ENCODE measurements at regions of chr6 and their contacts with region 1.

Region 1: GRCh38 chr6:47242483-47243386 is 67.0 kb downstream of the TNFRSF21 start:
- DNase-seq: peak; percentile 92
- H3K4me3 ChIP-seq: no peak overlapping the region
- H3K27ac ChIP-seq: peak overlapping the region; percentile 35
- H3K4me1 ChIP-seq: peaks cover 9% of the 10 kb centered on the region
- H3K27me3 ChIP-seq: no peaks in the 10 kb centered on the region
- CTCF ChIP-seq: no peak

Region 2: DNA sequence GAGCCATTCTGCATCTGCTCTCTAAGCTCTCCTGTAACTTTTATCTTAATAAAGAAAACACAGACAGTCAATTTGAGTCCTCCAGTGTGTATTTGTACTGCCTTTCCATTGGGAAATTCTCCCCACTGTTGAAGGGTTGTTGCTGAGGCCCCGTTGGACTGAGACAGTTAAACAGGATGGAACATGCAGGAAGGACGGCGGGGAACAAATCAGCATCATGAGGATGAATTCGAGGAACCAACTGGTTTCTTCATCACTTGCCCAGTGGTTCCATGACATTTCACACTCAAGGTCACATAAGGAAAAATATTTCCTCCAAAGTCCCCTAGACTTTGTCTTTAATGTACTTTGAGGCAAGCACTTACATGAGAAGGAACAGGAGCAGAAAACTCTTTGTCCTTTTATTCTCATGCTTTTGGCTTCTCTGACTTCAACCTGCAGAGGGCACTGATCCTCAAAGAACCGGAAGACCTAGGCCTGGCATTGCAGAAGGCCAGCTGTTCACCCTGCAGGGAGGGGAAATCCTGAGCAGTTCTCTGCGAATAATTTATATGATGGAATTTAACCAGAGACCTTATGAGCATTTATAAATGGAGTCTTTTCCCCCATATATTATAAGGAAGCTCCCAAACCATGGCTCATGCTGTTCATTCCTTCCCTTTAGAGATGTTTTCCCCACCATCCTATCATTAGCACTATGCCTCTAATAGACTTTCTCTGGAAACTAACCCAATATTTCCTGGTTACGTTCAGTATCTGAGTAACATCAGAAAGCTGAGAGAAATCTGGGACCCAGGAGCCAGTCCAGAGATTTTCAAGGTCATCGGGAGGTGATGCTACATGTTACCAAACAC is 145.4 kb before region 1 on chr6:
- intact Hi-C with region 1: loop called (anchors 10 kb)
- DNase-seq: peak; percentile 86
- H3K4me3 ChIP-seq: no peak overlapping the region
- H3K27ac ChIP-seq: no peak overlapping the region
- H3K4me1 ChIP-seq: peaks cover 6% of the 10 kb centered on the region
- H3K27me3 ChIP-seq: no peaks in the 10 kb centered on the region
- CTCF ChIP-seq: peak; percentile 58

Region 3: GRCh38 chr6:47309291-47310130 is 66.8 kb after region 1 on chr6 and contains the start of gene TNFRSF21:
- intact Hi-C with region 1: loop called (anchors 10 kb)
- DNase-seq: peak; percentile 96
- H3K4me3 ChIP-seq: peak within 1 kb of the TSS; percentile 88
- H3K27ac ChIP-seq: peak within 1 kb of the TSS; percentile 93
- H3K4me1 ChIP-seq: no peaks in the 10 kb centered on the region
- H3K27me3 ChIP-seq: no peaks in the 10 kb centered on the region
- CTCF ChIP-seq: peak; percentile 86
- total RNA-seq, gene TNFRSF21: 74.0 to 102 TPM

Measured in colonic mucosa (tissue), 4 donors.